GM12878 (cell line): ENCODE measurements at regions of chr22 and their contacts with region 1.

Region 1: DNA sequence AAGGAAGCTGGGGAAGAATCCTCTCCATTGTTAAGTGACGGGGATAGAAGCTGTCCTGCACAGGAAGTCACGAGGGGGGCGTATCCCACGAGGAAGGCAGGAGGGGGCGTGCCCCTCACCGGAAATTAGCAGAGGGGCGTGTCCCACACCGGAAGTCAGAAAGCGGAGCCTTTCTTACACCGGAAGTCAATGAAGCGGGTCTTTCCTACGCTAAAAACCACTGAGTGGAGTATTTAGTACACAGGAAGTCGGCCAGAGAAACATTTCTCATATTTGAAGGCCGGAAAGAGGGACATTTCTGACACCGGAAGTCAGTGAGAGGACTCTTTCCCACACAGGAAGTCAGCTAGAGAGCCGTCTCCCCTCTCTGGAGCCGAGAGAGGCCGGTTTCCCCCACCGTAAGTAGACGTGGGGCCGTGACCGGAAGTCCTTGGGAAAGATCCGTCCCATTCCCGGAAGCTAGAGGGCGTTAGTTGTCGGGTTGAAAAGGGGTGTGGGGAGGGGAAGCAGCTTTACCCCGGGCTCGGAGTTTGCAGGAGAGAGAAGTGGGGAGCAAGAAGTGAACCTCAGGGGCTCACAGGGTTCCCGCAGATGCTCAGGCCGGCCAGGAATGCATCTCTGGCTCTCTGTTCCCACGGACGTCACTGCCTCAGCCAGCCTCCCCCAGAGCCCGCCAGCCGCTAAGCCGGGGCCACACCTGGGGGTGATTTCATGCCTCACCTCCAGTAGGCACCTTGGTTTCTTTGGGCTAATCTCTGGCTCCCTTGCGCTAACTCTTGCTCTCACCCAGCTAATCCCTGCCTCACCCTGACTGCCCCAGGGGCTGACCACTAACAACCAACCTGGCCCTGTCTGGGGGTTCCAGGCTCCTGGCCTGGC is 15.4 kb downstream of the MIAT start:
- DNase-seq: peak; percentile 98
- ATAC-seq: peak; percentile 79
- H3K4me3 ChIP-seq: peak overlapping the region; percentile 100
- H3K27ac ChIP-seq: peak overlapping the region; percentile 99
- H3K4me1 ChIP-seq: peaks cover 39% of the 10 kb centered on the region
- H3K27me3 ChIP-seq: no peaks in the 10 kb centered on the region
- CTCF ChIP-seq: peak; percentile 61 to 66 (median 66)
- EP300 ChIP-seq: no peak
- POLR2A ChIP-seq: peak; percentile 82
- RAD21 ChIP-seq: peak; percentile 24; the same call in 1 of the 2 replicates

Region 2: DNA sequence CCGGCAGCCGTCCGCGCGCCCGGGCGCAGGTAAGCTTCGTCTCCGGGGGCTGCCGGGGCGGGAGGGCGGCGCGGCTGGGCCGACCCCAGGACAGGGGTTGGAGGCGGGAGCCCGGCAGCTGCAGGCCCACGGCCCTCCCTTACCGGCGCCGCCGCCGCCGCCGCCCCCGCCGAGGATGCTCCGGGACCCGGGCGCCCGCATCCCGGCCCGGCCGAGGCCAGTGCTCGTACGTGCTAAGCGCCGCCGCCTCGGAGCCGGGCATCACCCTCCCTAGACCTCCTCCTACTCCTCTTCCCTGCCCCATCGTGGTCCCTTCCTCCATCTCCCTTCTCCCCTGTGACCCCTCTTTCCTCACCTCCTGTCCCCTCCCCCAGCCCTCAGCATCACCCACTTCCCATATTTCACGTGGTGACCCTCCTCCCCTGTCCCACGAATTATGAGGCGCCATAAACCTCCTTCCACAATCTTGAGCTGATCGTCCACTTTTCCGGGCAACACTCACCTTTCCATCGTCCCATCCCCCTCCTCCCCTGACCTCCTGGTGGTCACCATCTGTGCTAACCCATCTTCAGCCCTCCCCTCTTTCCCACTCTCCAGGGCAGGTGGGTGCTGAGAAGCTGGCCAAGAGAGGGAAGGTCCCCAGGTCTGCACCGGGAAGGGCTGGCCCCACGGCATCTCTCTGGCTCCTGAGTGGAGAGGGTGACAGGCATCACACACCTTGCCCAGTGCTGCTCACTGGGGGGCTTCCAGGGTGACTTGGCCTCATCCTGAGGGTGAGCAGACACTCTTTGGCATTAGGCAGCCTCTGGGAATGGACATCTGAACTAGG is 243.2 kb before region 1 on chr22:
- CTCF ChIA-PET with region 1: interaction called, 4 read pairs
- POLR2A ChIA-PET with region 1: interaction called, 7 read pairs
- RAD21 ChIA-PET with region 1: interaction called, 6 read pairs
- SMC1A ChIA-PET with region 1: interaction called, 16 read pairs
- in situ Hi-C with region 1: no loop called
- intact Hi-C with region 1: no loop called
- DNase-seq: no peak
- ATAC-seq: no peak
- H3K4me3 ChIP-seq: peak overlapping the region; percentile 92
- H3K27ac ChIP-seq: peak overlapping the region; percentile 41
- H3K4me1 ChIP-seq: peaks cover 36% of the 10 kb centered on the region
- H3K27me3 ChIP-seq: no peaks in the 10 kb centered on the region
- CTCF ChIP-seq: no peak
- EP300 ChIP-seq: no peak
- POLR2A ChIP-seq: no peak
- RAD21 ChIP-seq: no peak

Region 3: GRCh38 chr22:26709617-26710390 is 37.0 kb after region 1 on chr22:
- CTCF ChIA-PET with region 1: interaction called, 6 read pairs
- POLR2A ChIA-PET with region 1: interaction called, 3 read pairs
- RAD21 ChIA-PET with region 1: interaction called, 5 read pairs
- SMC1A ChIA-PET with region 1: interaction called, 13 read pairs
- in situ Hi-C with region 1: no loop called
- intact Hi-C with region 1: no loop called
- DNase-seq: no peak
- ATAC-seq: no peak
- H3K4me3 ChIP-seq: no peak overlapping the region
- H3K27ac ChIP-seq: peak overlapping the region; percentile 98
- H3K4me1 ChIP-seq: peaks cover 61% of the 10 kb centered on the region
- H3K27me3 ChIP-seq: no peaks in the 10 kb centered on the region
- CTCF ChIP-seq: no peak
- EP300 ChIP-seq: no peak
- POLR2A ChIP-seq: no peak
- RAD21 ChIP-seq: no peak

Region 4: GRCh38 chr22:26797910-26798309 is 125.1 kb after region 1 on chr22:
- CTCF ChIA-PET with region 1: no interaction called
- POLR2A ChIA-PET with region 1: no interaction called
- RAD21 ChIA-PET with region 1: no interaction called
- SMC1A ChIA-PET with region 1: no interaction called
- in situ Hi-C with region 1: no loop called
- intact Hi-C with region 1: no loop called
- DNase-seq: no peak
- ATAC-seq: no peak
- H3K4me3 ChIP-seq: no peak overlapping the region
- H3K27ac ChIP-seq: no peak overlapping the region
- H3K4me1 ChIP-seq: no peaks in the 10 kb centered on the region
- H3K27me3 ChIP-seq: no peaks in the 10 kb centered on the region
- CTCF ChIP-seq: no peak
- EP300 ChIP-seq: no peak
- POLR2A ChIP-seq: no peak
- RAD21 ChIP-seq: no peak